Endothelial cell of umbilical vein (primary cell): ENCODE measurements at regions of chrX and their contacts with region 1.

Region 1: DNA sequence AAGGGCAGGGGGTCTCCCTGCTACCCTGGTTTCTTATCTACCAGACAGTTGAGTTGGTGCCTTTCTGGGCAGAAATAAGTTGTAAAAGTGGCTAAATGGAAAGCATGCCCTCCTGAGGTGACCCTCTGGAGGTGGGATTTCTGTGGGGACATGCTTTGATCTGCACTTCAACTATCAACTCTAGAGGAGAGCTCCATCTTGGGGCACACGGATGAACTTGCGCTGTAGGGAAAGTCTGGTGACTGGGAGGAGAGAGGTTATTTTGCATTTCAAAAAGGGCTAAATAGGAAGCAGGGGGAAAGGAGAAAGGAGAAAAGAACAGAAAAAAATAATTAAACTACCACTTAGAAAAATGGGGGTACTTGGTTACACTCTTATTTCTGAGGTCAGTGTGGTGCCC is 12.7 kb upstream of the RHOXF2B start:
- DNase-seq: no peak
- H3K4me3 ChIP-seq: no peak overlapping the region
- H3K27ac ChIP-seq: no peak overlapping the region
- H3K4me1 ChIP-seq: no peaks in the 10 kb centered on the region
- H3K27me3 ChIP-seq: no peaks in the 10 kb centered on the region
- CTCF ChIP-seq: no peak
- POLR2A ChIP-seq: no peak

Region 2: DNA sequence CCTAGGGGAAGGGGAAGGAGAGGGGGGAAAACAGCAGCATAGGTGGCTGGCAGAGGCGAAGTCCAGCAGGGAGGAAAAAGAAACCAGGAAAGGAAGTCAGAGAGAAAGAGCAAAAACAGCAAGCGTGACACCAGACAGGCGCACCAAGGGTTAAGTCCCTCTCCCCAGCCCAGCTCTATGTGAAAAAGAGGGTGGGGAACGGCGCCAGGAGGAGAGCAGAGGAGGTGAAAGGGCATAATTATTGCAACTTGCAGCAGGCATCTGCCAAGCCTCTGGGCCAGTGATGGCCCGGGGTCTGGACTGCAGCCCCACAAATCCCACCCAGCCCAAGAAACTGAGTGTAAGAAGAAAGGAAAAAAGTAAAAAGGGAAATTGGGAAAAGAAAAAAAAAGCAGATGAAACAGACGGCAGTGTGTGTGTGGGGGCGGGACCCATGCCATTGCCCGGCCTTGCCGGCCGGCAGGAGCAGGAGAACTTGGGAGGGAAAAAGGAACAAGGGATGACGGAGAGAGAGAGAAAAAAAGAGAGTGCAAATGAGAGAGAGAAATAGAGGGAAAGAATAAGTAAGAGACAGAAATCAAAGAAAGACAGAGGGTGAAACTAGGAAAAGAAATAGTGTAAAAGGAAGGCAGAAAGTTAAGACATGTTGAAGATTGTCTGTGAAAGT is 54.1 kb after region 1 on chrX:
- CTCF ChIA-PET with region 1: no interaction called
- POLR2A ChIA-PET with region 1: no interaction called
- dilution Hi-C with region 1: no loop called
- intact Hi-C with region 1: loop called (anchors 10 kb)
- DNase-seq: no peak
- H3K4me3 ChIP-seq: no peak overlapping the region
- H3K27ac ChIP-seq: no peak overlapping the region
- H3K4me1 ChIP-seq: no peaks in the 10 kb centered on the region
- H3K27me3 ChIP-seq: peaks cover 3 to 7% of the 10 kb centered on the region in 2 experiments
- CTCF ChIP-seq: no peak
- POLR2A ChIP-seq: no peak